Naive thymus-derived CD4-positive, alpha-beta T cell (primary cell): ENCODE measurements at regions of chr4 and their contacts with region 1.

Region 1: GRCh38 chr4:102430461-102430910 is 70.7 kb upstream of the NFKB1 start:
- DNase-seq: no peak
- ATAC-seq: no peak
- H3K4me3 ChIP-seq: peak overlapping the region; percentile 72
- H3K4me3 Mint-ChIP-seq: peak overlapping the region; percentile 75 to 92 (median 88)
- H3K27ac ChIP-seq: peak overlapping the region; percentile 67
- H3K27ac Mint-ChIP-seq: peak overlapping the region in 8 of 9 donors; percentile 26 to 92 (median 80)
- H3K4me1 ChIP-seq: no peaks in the 10 kb centered on the region
- H3K4me1 Mint-ChIP-seq: peaks cover 0 to 19% (median 5%) of the 10 kb centered on the region in 7 donors
- H3K27me3 ChIP-seq: no peaks in the 10 kb centered on the region
- H3K27me3 Mint-ChIP-seq: peaks cover 0 to 16% (median 0%) of the 10 kb centered on the region in 5 donors

Region 2: GRCh38 chr4:101187841-101188240 is 1242.6 kb before region 1 on chr4:
- CTCF ChIA-PET with region 1: no interaction called
- POLR2A ChIA-PET with region 1: no interaction called
- intact Hi-C with region 1: loop called in 1 of 2 experiments (anchors 1 kb)
- DNase-seq: peak in 4 of 9 donors; percentile 7 to 27 (median 15)
- ATAC-seq: peak; percentile 42
- H3K4me3 ChIP-seq: no peak overlapping the region
- H3K4me3 Mint-ChIP-seq: peak overlapping the region in 1 of 10 donors; percentile 25
- H3K27ac ChIP-seq: no peak overlapping the region
- H3K27ac Mint-ChIP-seq: no peak overlapping the region
- H3K4me1 ChIP-seq: no peaks in the 10 kb centered on the region
- H3K4me1 Mint-ChIP-seq: peaks cover 7 to 41% (median 17%) of the 10 kb centered on the region in 7 donors
- H3K27me3 ChIP-seq: no peaks in the 10 kb centered on the region
- H3K27me3 Mint-ChIP-seq: no peaks in the 10 kb centered on the region

Region 3: GRCh38 chr4:102335616-102336015 is 94.9 kb before region 1 on chr4:
- CTCF ChIA-PET with region 1: interaction called, 10 read pairs
- POLR2A ChIA-PET with region 1: no interaction called
- intact Hi-C with region 1: no loop called
- DNase-seq: peak in 2 of 9 donors; percentile 3 to 22
- ATAC-seq: no peak
- H3K4me3 ChIP-seq: no peak overlapping the region
- H3K4me3 Mint-ChIP-seq: peak overlapping the region in 3 of 10 donors; percentile 13 to 18 (median 18)
- H3K27ac ChIP-seq: no peak overlapping the region
- H3K27ac Mint-ChIP-seq: peak overlapping the region in 1 of 9 donors; percentile 16
- H3K4me1 ChIP-seq: peaks cover 0 to 9% of the 10 kb centered on the region in 2 donors
- H3K4me1 Mint-ChIP-seq: peaks cover 32 to 83% (median 77%) of the 10 kb centered on the region in 7 donors
- H3K27me3 ChIP-seq: no peaks in the 10 kb centered on the region
- H3K27me3 Mint-ChIP-seq: no peaks in the 10 kb centered on the region

Region 4: DNA sequence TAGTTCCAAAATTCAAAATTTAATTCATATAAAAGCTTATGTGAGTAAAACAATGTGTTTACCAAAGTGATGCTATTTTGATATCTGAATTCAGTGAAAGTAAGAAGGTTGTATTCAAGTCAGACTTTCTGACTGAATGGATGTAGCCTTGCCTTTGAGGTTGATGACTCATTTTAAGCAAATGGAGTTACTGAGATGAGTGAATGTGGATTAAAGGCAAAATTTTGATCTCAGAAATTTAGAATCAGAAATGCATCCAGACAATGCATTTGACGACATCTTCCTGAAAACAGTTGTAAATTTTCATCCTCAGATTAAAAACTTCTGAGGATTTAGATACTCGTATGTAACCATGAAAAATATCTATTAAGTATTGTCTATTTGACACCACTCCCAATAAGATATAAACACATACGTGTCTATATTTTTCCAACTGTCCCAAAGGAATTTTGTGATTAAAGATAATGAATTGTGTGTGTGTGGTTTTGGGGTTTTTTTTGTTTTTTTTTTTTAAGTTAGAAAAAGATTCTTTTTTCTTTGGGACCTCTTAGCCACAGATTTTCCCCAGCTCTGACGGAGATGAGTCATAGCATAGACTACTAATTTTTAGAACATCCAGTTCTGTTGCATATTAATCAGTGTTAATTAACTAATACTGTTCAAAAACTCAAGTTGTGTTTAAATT is 105.1 kb after region 1 on chr4:
- CTCF ChIA-PET with region 1: no interaction called
- POLR2A ChIA-PET with region 1: no interaction called
- intact Hi-C with region 1: no loop called
- DNase-seq: no peak
- ATAC-seq: peak; percentile 30
- H3K4me3 ChIP-seq: no peak overlapping the region
- H3K4me3 Mint-ChIP-seq: no peak overlapping the region
- H3K27ac ChIP-seq: no peak overlapping the region
- H3K27ac Mint-ChIP-seq: peak overlapping the region in 1 of 9 donors; percentile 62
- H3K4me1 ChIP-seq: peaks cover 19 to 21% of the 10 kb centered on the region in 2 donors
- H3K4me1 Mint-ChIP-seq: peaks cover 22 to 71% (median 53%) of the 10 kb centered on the region in 7 donors
- H3K27me3 ChIP-seq: no peaks in the 10 kb centered on the region
- H3K27me3 Mint-ChIP-seq: no peaks in the 10 kb centered on the region

Region 5: GRCh38 chr4:102760645-102761295 is 330.3 kb after region 1 on chr4 and contains the start of gene MANBA:
- CTCF ChIA-PET with region 1: no interaction called
- POLR2A ChIA-PET with region 1: no interaction called
- intact Hi-C with region 1: loop called in 1 of 2 experiments (anchors 2 kb)
- DNase-seq: peak; percentile 62 to 81 (median 73)
- ATAC-seq: peak; percentile 91
- H3K4me3 ChIP-seq: peak within 1 kb of the TSS; percentile 62
- H3K4me3 Mint-ChIP-seq: peak within 1 kb of the TSS; percentile 86 to 99 (median 98)
- H3K27ac ChIP-seq: peak within 1 kb of the TSS; percentile 72
- H3K27ac Mint-ChIP-seq: peak within 1 kb of the TSS; percentile 56 to 92 (median 84)
- H3K4me1 ChIP-seq: peaks cover 4 to 16% of the 10 kb centered on the region in 2 donors
- H3K4me1 Mint-ChIP-seq: peaks cover 35 to 50% (median 42%) of the 10 kb centered on the region in 7 donors
- H3K27me3 ChIP-seq: no peaks in the 10 kb centered on the region
- H3K27me3 Mint-ChIP-seq: peaks cover 0 to 13% (median 0%) of the 10 kb centered on the region in 5 donors
- total RNA-seq, gene MANBA: 15.7 to 56.4 (median 29.7) TPM

Region 6: GRCh38 chr4:103019308-103020124 is 589.0 kb after region 1 on chr4 and contains the start of gene SLC9B1:
- CTCF ChIA-PET with region 1: no interaction called
- POLR2A ChIA-PET with region 1: interaction called, 3 read pairs
- intact Hi-C with region 1: loop called in 1 of 2 experiments (anchors 1 kb)
- DNase-seq: peak; percentile 87 to 95 (median 92)
- ATAC-seq: peak; percentile 98
- H3K4me3 ChIP-seq: peak within 1 kb of the TSS; percentile 48
- H3K4me3 Mint-ChIP-seq: peak within 1 kb of the TSS; percentile 84 to 98 (median 93)
- H3K27ac ChIP-seq: peak within 1 kb of the TSS; percentile 80
- H3K27ac Mint-ChIP-seq: peak within 1 kb of the TSS in 6 of 9 donors; percentile 96 to 99 (median 98)
- H3K4me1 ChIP-seq: peaks cover 13 to 14% of the 10 kb centered on the region in 2 donors
- H3K4me1 Mint-ChIP-seq: peaks cover 0 to 29% (median 20%) of the 10 kb centered on the region in 7 donors
- H3K27me3 ChIP-seq: no peaks in the 10 kb centered on the region
- H3K27me3 Mint-ChIP-seq: no peaks in the 10 kb centered on the region
- total RNA-seq, gene SLC9B1: 1.4 to 7.2 (median 3.9) TPM

Region 7: GRCh38 chr4:103099691-103100392 is 669.4 kb after region 1 on chr4 and contains the start of gene BDH2:
- CTCF ChIA-PET with region 1: interaction called, 3 read pairs
- POLR2A ChIA-PET with region 1: no interaction called
- intact Hi-C with region 1: loop called (anchors 1 to 2 kb)
- DNase-seq: peak in 7 of 9 donors; percentile 72 to 86 (median 83)
- ATAC-seq: peak; percentile 100
- H3K4me3 ChIP-seq: peak within 1 kb of the TSS; percentile 62
- H3K4me3 Mint-ChIP-seq: peak within 1 kb of the TSS; percentile 88 to 100 (median 94)
- H3K27ac ChIP-seq: peak within 1 kb of the TSS; percentile 69
- H3K27ac Mint-ChIP-seq: peak within 1 kb of the TSS; percentile 81 to 95 (median 92)
- H3K4me1 ChIP-seq: peaks cover 4 to 11% of the 10 kb centered on the region in 2 donors
- H3K4me1 Mint-ChIP-seq: peaks cover 22 to 45% (median 34%) of the 10 kb centered on the region in 7 donors
- H3K27me3 ChIP-seq: no peaks in the 10 kb centered on the region
- H3K27me3 Mint-ChIP-seq: no peaks in the 10 kb centered on the region
- total RNA-seq, gene BDH2: 8.4 to 21.9 (median 18.5) TPM